Activated CD4-positive, alpha-beta T cell treated with anti-CD3 and anti-CD28 coated beads, Interleukin-2, amount 10 ng/mL, durations not matched to agents 24 days and 14 days (primary cell): ENCODE measurements at regions of chr10 and their contacts with region 1.

Region 1: DNA sequence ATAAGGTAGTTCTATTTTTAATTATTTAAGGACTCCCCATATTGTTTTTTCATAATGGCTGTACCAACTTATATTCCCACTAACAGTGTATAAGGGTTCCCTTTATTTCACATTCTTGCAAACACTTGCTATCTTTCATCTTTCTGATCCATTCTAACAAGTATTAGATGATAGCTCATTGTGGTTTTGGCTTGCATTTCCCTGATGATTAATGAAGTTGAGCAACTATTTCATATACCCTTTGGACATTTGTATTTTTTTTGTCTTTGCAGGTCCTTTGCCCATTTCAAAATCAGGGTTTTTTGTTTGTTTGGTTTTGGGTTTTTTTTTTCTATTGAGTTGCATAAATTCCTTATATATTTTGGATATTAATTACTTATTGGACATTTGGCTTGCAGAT is 107.2 kb downstream of the EPC1 start:
- DNase-seq: no peak
- H3K4me3 Mint-ChIP-seq: no peak overlapping the region
- H3K27ac Mint-ChIP-seq: no peak overlapping the region
- H3K4me1 Mint-ChIP-seq: peaks cover 10% of the 10 kb centered on the region
- H3K27me3 Mint-ChIP-seq: no peaks in the 10 kb centered on the region

Region 2: DNA sequence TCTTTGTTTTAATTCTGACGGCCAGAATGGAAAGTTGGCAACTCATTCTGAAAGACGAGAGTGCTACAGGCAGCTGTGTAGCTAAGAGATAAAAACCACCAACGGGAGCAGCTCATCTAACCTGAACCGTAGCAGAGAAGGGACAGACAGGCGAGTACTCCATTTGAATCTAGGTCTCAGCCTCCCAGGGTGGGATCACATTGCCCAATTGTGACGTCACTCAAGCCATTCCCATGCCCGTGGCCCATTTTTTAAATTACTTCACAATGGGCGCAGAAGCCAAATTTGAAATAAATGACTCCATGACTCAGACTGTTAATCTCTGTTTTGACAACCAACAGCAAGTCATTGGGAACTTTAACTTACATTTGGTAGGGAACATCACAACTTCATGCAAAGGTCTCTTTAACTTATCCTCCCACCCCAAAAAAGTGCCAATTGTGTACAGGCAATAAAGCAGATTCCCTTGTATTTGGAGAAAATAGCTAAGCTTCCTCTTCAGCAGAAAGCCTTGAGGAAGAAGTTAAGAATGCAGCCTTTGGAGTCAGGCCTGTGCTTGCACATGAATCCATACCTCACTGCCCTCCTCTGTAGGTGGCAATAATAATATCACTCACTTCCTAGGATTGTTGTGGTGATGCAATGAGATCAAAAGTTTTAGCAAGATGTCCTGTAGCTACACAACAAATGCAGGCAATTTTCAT is 90.4 kb before region 1 on chr10:
- intact Hi-C with region 1: loop called (anchors 1 kb)
- DNase-seq: peak; percentile 80
- H3K4me3 Mint-ChIP-seq: peak overlapping the region; percentile 76
- H3K27ac Mint-ChIP-seq: peak overlapping the region; percentile 94
- H3K4me1 Mint-ChIP-seq: peaks cover 34% of the 10 kb centered on the region
- H3K27me3 Mint-ChIP-seq: no peaks in the 10 kb centered on the region

Region 3: DNA sequence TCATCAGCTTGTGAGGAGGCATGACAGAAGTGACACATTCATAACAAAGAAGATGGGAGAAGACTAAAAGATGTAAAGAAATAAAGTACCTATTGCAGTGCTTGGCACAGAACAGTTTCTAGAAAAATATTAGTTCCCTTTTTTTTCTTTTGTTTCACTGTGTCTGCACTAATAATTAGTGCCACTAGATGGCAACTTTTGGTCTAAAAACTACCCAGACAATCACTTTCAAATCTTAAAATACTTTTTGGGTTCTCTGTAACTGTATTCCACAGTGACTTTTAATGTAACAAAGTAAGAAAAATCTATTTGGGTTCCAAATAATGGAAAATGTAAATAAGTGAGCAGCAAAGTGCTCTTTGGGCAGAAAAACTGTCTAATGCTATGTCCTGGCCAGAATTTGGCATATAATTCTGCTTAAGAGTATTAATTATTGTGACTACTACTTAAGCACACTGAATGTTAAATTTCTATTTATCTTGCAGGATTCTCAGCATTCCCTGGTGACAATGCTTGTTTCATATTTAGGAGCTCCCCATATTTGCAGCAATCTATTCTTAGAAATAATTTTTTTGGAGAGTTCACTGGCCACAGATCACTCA is 48.8 kb before region 1 on chr10:
- intact Hi-C with region 1: loop called (anchors 5 kb)
- DNase-seq: peak; percentile 65
- H3K4me3 Mint-ChIP-seq: no peak overlapping the region
- H3K27ac Mint-ChIP-seq: peak overlapping the region; percentile 32
- H3K4me1 Mint-ChIP-seq: peaks cover 4% of the 10 kb centered on the region
- H3K27me3 Mint-ChIP-seq: peaks cover 5% of the 10 kb centered on the region

Region 4: DNA sequence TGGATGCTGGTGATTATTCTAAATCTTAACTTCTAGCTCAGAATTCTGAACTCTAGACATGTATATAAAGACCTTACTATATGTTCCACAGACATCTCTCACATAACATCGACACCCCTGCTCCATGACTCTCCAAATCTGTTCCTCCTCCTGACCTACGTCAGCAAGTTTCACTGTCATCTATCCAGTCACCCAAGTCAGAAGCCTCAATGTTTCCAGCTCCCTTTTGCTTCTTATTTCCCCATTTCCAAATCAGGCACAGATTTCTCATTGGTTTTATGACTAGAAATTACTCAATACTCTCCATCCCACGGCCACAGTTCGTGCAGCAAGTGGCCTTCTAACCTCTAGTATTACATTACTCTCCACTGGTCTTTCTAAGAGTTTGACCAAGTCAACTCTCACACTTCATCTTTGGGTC is 78.7 kb after region 1 on chr10:
- intact Hi-C with region 1: loop called (anchors 1 kb)
- DNase-seq: peak; percentile 62
- H3K4me3 Mint-ChIP-seq: peak overlapping the region; percentile 32
- H3K27ac Mint-ChIP-seq: peak overlapping the region; percentile 69
- H3K4me1 Mint-ChIP-seq: peaks cover 40% of the 10 kb centered on the region
- H3K27me3 Mint-ChIP-seq: no peaks in the 10 kb centered on the region

Region 5: GRCh38 chr10:32332299-32332750 is 92.6 kb after region 1 on chr10:
- intact Hi-C with region 1: loop called (anchors 1 kb)
- DNase-seq: peak; percentile 91
- H3K4me3 Mint-ChIP-seq: peak overlapping the region; percentile 75
- H3K27ac Mint-ChIP-seq: peak overlapping the region; percentile 91
- H3K4me1 Mint-ChIP-seq: peaks cover 76% of the 10 kb centered on the region
- H3K27me3 Mint-ChIP-seq: no peaks in the 10 kb centered on the region

Region 6: GRCh38 chr10:32413513-32413912 is 173.7 kb after region 1 on chr10:
- intact Hi-C with region 1: loop called (anchors 1 kb)
- DNase-seq: no peak
- H3K4me3 Mint-ChIP-seq: no peak overlapping the region
- H3K27ac Mint-ChIP-seq: peak overlapping the region; percentile 1
- H3K4me1 Mint-ChIP-seq: peaks cover 6% of the 10 kb centered on the region
- H3K27me3 Mint-ChIP-seq: no peaks in the 10 kb centered on the region